Heart right ventricle (tissue), 16 donors: ENCODE measurements at regions of chr1 and their contacts with region 1.

Region 1: GRCh38 chr1:7646981-7647901 is 123.9 kb upstream of the VAMP3 start:
- DNase-seq: peak; percentile 60 to 79
- ATAC-seq: peak in 5 of 8 donors; percentile 32 to 56 (median 41)
- H3K4me3 ChIP-seq: no peak overlapping the region
- H3K27ac ChIP-seq: no peak overlapping the region
- H3K4me1 ChIP-seq: peaks cover 2 to 30% (median 19%) of the 10 kb centered on the region in 9 donors
- H3K27me3 ChIP-seq: peaks cover 0 to 8% (median 0%) of the 10 kb centered on the region in 7 donors
- CTCF ChIP-seq: peak; percentile 89 to 99 (median 93)

Region 2: DNA sequence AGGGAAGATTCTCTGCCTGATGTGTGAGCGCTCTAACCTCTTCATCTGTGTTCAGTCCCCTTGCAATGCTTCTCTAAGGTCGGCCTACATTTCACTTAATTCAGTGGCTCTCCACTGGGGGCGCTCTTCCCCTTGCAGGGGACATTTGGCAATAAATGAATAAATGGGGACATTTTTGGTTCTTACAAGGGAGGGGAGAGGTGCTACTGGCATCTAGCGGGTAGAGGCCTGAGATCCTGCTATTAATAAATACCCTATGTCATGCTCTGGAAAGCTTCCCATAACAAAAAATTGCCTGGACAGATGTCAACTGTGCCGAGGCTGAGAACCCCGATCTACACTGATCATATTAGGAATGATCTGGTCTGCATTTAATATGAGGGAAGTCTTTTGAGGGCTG is 919.7 kb before region 1 on chr1:
- intact Hi-C with region 1: loop called in 5 of 10 experiments (anchors 5 to 10 kb)
- DNase-seq: peak; percentile 41 to 44
- ATAC-seq: peak; percentile 28 to 68 (median 58)
- H3K4me3 ChIP-seq: no peak overlapping the region
- H3K27ac ChIP-seq: no peak overlapping the region
- H3K4me1 ChIP-seq: peaks cover 0 to 14% (median 0%) of the 10 kb centered on the region in 9 donors
- H3K27me3 ChIP-seq: no peaks in the 10 kb centered on the region
- CTCF ChIP-seq: peak; percentile 72 to 90 (median 85)

Region 3: GRCh38 chr1:7070389-7071029 is 576.7 kb before region 1 on chr1:
- intact Hi-C with region 1: loop called in 2 of 10 experiments (anchors 2 to 10 kb)
- DNase-seq: peak; percentile 42 to 66
- ATAC-seq: peak; percentile 71 to 92 (median 84)
- H3K4me3 ChIP-seq: peak overlapping the region in 9 of 10 donors; percentile 17 to 53 (median 42)
- H3K27ac ChIP-seq: no peak overlapping the region
- H3K4me1 ChIP-seq: peaks cover 0 to 9% (median 7%) of the 10 kb centered on the region in 9 donors
- H3K27me3 ChIP-seq: peaks cover 0 to 11% (median 0%) of the 10 kb centered on the region in 7 donors
- CTCF ChIP-seq: peak; percentile 70 to 90 (median 84)

Region 4: GRCh38 chr1:7229696-7230631 is 417.3 kb before region 1 on chr1:
- intact Hi-C with region 1: loop called in 6 of 10 experiments (anchors 5 to 10 kb)
- DNase-seq: no peak
- ATAC-seq: no peak
- H3K4me3 ChIP-seq: no peak overlapping the region
- H3K27ac ChIP-seq: no peak overlapping the region
- H3K4me1 ChIP-seq: no peaks in the 10 kb centered on the region
- H3K27me3 ChIP-seq: peaks cover 0 to 10% (median 0%) of the 10 kb centered on the region in 7 donors
- CTCF ChIP-seq: no peak

Region 5: GRCh38 chr1:7580923-7581753 is 66.1 kb before region 1 on chr1:
- intact Hi-C with region 1: loop called in 4 of 10 experiments (anchors 5 kb)
- DNase-seq: no peak
- ATAC-seq: no peak
- H3K4me3 ChIP-seq: no peak overlapping the region
- H3K27ac ChIP-seq: no peak overlapping the region
- H3K4me1 ChIP-seq: peaks cover 2 to 12% (median 7%) of the 10 kb centered on the region in 9 donors
- H3K27me3 ChIP-seq: peaks cover 0 to 10% (median 0%) of the 10 kb centered on the region in 7 donors
- CTCF ChIP-seq: no peak

Region 6: GRCh38 chr1:7690496-7691182 is 43.4 kb after region 1 on chr1:
- intact Hi-C with region 1: no loop called
- DNase-seq: no peak
- ATAC-seq: no peak
- H3K4me3 ChIP-seq: no peak overlapping the region
- H3K27ac ChIP-seq: no peak overlapping the region
- H3K4me1 ChIP-seq: peaks cover 0 to 8% (median 0%) of the 10 kb centered on the region in 9 donors
- H3K27me3 ChIP-seq: peaks cover 0 to 6% (median 0%) of the 10 kb centered on the region in 7 donors
- CTCF ChIP-seq: no peak